ENCODE measurements at regions of chr15 and their contacts with region 1.

Region 1: DNA sequence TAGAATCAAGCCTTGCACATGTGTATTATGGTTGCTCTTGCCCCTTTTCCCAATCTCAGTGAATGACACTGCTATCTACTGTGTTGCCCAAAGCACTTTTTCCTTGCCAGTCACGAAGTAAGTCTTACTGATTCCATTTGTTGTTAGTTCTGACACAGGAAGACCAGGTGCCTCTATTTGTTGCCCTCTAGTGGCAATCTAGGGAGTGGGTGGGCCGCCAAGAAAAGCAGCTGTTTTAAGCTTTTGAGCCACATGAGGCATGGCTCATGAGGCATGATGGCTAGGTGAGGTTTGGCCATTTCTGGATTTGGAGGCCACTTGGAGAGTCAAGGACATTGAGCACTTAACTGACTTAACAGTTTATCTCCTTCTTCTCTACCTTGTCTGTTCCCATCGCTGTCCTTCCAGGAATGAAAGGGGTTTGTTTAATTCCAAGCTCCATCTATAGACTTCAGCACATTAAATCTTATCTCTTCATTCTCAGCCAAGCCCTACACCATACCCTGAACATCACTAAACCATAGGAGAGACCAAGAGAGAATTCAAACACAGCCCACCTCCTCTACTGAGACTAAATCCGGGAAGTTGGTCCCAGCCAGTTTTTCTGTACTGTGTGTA is 103.1 kb downstream of the HCN4 start:
- DNase-seq: peak; percentile 66 to 74
- ATAC-seq: peak; percentile 97 to 98
- H3K4me3 ChIP-seq: no peak overlapping the region
- H3K27ac ChIP-seq: no peak overlapping the region
- H3K4me1 ChIP-seq: peaks cover 6% of the 10 kb centered on the region; the same call in 1 of the 3 replicates
- CTCF ChIP-seq: peak; percentile 75
- EP300 ChIP-seq: no peak
- POLR2A ChIP-seq: no peak
- RAD21 ChIP-seq: peak; percentile 42 to 55

Region 2: DNA sequence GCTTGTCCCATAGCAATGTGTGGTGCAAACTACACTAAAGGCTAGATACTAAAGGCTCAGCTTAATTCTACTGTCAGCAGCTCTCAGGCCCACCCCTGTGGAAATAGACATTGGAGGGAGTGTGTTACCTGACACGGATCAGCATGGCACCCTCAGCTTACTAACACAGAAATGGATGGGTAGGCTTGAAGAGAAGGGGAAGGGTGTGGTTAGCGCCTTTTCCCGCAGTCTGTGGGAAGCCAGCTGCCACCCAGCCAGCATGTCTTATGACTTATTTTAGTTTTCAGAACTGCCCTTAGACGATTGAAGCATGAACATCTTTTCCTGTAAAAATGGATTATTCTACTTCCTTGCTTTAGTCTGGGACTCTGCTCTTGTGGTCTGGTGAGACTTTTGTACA is 456.3 kb before region 1 on chr15:
- CTCF ChIA-PET with region 1: no interaction called
- POLR2A ChIA-PET with region 1: no interaction called
- DNase-seq: no peak
- ATAC-seq: no peak; a peak in 2 of 6 replicates
- H3K4me3 ChIP-seq: no peak overlapping the region
- H3K27ac ChIP-seq: no peak overlapping the region
- H3K4me1 ChIP-seq: no peaks in the 10 kb centered on the region
- CTCF ChIP-seq: no peak
- EP300 ChIP-seq: no peak
- POLR2A ChIP-seq: no peak
- RAD21 ChIP-seq: no peak

Region 3: DNA sequence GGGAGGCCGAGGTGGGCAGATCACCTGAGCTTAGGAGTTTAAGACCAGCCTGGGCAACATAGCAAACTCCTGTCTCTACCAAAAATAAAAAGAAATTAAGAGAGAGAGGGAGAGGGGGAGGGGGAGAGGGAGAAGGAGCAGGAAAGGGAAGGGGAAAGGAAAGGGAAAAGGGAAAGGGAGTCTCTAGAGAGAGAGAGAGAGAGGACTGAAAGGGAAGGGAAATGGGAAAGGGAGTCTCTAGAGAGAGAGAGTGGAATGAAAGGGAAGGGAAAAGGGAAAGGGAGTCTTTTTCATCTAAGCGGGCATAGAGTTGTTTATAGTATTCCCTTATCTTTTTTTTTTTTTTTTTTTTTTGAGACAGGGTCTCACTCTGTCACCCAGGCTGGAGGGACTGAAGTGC is 65.3 kb before region 1 on chr15:
- CTCF ChIA-PET with region 1: no interaction called
- POLR2A ChIA-PET with region 1: no interaction called
- DNase-seq: no peak
- ATAC-seq: no peak
- H3K4me3 ChIP-seq: no peak overlapping the region
- H3K27ac ChIP-seq: no peak overlapping the region
- H3K4me1 ChIP-seq: no peaks in the 10 kb centered on the region
- CTCF ChIP-seq: no peak
- EP300 ChIP-seq: no peak
- POLR2A ChIP-seq: no peak
- RAD21 ChIP-seq: no peak

Region 4: GRCh38 chr15:73249499-73249898 is 16.1 kb before region 1 on chr15:
- CTCF ChIA-PET with region 1: interaction called, 33 read pairs
- POLR2A ChIA-PET with region 1: no interaction called
- DNase-seq: no peak
- ATAC-seq: no peak
- H3K4me3 ChIP-seq: no peak overlapping the region
- H3K27ac ChIP-seq: no peak overlapping the region
- H3K4me1 ChIP-seq: no peaks in the 10 kb centered on the region
- CTCF ChIP-seq: no peak
- EP300 ChIP-seq: no peak
- POLR2A ChIP-seq: no peak
- RAD21 ChIP-seq: no peak

Region 5: DNA sequence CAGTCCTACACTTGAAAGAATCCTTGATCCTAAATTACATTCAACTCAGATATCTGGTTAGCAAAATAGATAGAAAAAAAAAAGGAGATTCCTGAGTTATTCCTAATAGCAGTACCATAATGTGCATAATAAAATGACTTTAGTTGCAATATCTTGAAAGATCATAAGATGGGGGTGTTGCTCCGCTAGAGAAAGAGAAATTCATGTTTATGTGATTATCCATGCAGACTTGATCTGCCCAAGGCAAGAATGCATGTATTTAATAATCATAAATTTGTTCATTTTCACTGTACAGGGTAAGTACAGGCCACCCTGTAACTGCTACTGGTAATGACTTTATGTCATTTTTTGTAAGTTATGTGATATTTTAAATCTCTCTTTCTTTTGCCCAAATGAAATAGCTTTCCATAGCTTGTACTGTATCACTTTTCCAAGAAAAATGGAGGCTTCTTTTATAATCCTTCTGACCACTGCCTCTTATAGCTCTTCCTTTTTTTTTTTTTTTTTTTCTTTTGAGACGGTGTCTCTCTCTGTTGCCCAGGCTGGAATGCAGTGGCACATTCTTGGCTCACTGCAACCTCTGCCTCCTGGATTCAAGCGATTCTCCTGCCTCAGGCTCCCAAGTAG is 18.6 kb after region 1 on chr15:
- CTCF ChIA-PET with region 1: interaction called, 112 read pairs
- POLR2A ChIA-PET with region 1: no interaction called
- DNase-seq: peak in 1 of 2 experiments; percentile 17
- ATAC-seq: peak; percentile 57; a peak in 4 of 6 replicates
- H3K4me3 ChIP-seq: no peak overlapping the region
- H3K27ac ChIP-seq: no peak overlapping the region
- H3K4me1 ChIP-seq: no peaks in the 10 kb centered on the region
- CTCF ChIP-seq: peak; percentile 37
- EP300 ChIP-seq: no peak
- POLR2A ChIP-seq: no peak
- RAD21 ChIP-seq: peak; percentile 52 to 58

Region 6: DNA sequence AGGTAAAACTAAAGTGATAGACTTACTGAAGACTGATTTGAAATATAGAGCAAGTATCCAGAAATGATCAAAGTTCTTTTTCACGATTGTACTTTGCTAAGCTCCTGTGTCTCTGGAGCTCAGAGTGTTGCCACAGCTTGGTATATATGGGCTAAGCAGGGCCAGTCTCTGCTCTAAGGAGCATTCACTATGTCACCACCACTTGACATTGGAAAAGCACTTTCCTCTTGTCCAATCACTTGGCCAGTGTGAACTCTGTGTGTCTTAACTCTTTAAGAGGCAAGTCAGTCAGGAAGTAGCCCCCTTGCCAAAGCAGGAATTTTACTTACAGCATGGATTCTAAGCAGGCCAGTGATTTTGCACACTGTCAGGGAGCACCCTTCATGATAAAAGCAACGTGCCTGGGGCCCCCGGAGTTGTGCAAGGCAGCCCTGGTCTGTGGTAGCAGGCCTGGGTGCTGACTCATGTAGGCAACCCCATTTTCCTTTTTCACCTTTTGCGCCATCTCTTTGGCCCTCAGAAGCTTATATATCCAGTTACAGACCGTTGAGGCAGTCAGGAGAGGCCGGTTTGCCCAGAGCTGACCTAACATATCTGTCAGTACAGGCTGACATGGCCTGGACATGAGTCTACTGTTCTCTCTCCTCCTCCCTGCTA is 30.1 kb after region 1 on chr15:
- CTCF ChIA-PET with region 1: interaction called, 11 read pairs
- POLR2A ChIA-PET with region 1: no interaction called
- DNase-seq: no peak
- ATAC-seq: 0 out of 6 replicates have a peak, but pooled peaks of 1 of the 2 experiments have one; percentile 33
- H3K4me3 ChIP-seq: no peak overlapping the region
- H3K27ac ChIP-seq: no peak overlapping the region
- H3K4me1 ChIP-seq: no peaks in the 10 kb centered on the region
- CTCF ChIP-seq: no peak
- EP300 ChIP-seq: no peak
- POLR2A ChIP-seq: no peak
- RAD21 ChIP-seq: no peak

Region 7: GRCh38 chr15:73305331-73306211 is 39.9 kb after region 1 on chr15:
- CTCF ChIA-PET with region 1: interaction called, 15 read pairs
- POLR2A ChIA-PET with region 1: no interaction called
- DNase-seq: peak; percentile 81 to 86
- ATAC-seq: peak; percentile 91 to 95
- H3K4me3 ChIP-seq: no peak overlapping the region
- H3K27ac ChIP-seq: no peak overlapping the region
- H3K4me1 ChIP-seq: no peaks in the 10 kb centered on the region
- CTCF ChIP-seq: peak; percentile 83
- EP300 ChIP-seq: no peak
- POLR2A ChIP-seq: no peak
- RAD21 ChIP-seq: peak; percentile 89 to 95